Breast epithelium (tissue), 4 donors: ENCODE measurements at regions of chr2 and their contacts with region 1.

Region 1: GRCh38 chr2:19484736-19485135 is 126.3 kb upstream of the OSR1 start:
- DNase-seq: no peak
- H3K4me3 ChIP-seq: no peak overlapping the region
- H3K27ac ChIP-seq: no peak overlapping the region
- H3K4me1 ChIP-seq: no peaks in the 10 kb centered on the region
- H3K27me3 ChIP-seq: no peaks in the 10 kb centered on the region
- CTCF ChIP-seq: no peak
- POLR2A ChIP-seq: no peak

Region 2: DNA sequence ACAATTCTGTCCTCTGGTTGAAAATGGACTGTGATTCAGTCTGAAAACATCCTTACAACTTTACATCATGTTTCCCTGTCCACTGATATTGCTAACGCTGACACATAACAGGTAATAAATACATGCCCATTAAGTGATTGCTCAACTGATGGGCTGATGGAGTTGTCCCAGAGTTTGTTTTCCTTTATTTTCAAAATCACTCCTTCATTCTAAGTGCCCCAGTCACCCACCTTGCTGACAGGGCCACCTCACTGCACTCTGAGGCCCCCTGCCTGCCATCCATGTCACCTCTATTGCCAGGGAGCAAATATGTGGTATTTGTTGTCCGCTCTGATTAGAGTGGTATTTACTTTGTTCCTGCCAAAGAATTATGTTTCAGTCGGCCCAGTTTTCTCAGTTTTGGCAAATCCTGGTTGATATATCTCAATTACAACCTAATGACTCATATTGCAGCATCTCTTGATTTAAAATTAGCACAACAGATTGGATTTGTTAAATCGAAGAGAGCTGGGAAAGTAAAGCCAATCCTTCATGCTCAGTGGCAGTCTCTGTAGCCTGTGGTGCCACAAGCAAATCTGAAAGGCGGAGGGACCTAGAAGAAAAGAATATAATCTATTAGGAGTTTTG is 1029.4 kb before region 1 on chr2:
- intact Hi-C with region 1: no loop called
- DNase-seq: no peak
- H3K4me3 ChIP-seq: no peak overlapping the region
- H3K27ac ChIP-seq: peak overlapping the region in 1 of 2 donors; percentile 42
- H3K4me1 ChIP-seq: no peaks in the 10 kb centered on the region
- H3K27me3 ChIP-seq: no peaks in the 10 kb centered on the region
- CTCF ChIP-seq: no peak
- POLR2A ChIP-seq: no peak

Region 3: DNA sequence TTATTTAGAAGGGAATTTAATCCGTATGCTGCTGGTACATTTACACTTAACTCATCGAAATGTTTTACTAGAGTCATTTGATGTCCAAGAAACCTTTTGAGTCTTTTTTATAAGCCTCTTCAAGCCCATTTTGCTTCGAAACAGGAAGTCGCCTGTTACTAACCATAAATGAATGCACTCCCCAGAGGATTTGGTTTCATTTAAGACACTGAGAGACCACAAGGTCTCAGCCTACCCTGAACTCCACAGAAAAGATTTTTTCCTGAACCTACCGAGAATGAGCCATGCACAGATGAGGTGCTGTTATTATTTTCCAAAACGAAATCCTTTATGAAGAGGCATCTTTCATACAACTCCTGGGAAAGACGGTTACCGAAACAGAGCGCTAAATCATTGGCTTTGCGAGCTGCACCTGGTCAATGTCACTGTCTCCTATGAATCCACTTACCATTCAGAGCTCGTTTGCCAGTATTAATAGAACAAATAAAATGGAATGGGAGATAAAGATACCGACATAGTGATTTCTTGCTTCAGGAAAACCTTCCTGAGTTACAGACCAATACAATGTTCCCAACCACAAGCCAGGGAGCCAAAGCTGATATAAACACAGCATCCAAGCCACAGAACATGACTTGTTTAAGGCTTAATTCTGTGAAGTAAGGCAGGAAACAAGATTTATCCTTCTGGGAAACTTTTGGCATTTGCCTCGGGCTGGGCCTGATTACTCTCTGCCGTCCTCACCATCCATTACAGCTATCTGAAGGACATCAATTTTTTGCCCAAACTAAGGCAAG is 508.4 kb before region 1 on chr2:
- intact Hi-C with region 1: loop called (anchors 5 kb)
- DNase-seq: no peak
- H3K4me3 ChIP-seq: peak overlapping the region in 2 of 3 donors; percentile 1 to 21
- H3K27ac ChIP-seq: peak overlapping the region; percentile 34 to 74
- H3K4me1 ChIP-seq: no peaks in the 10 kb centered on the region
- H3K27me3 ChIP-seq: no peaks in the 10 kb centered on the region
- CTCF ChIP-seq: no peak
- POLR2A ChIP-seq: no peak

Region 4: GRCh38 chr2:19425419-19425818 is 59.3 kb before region 1 on chr2:
- intact Hi-C with region 1: no loop called
- DNase-seq: no peak
- H3K4me3 ChIP-seq: no peak overlapping the region
- H3K27ac ChIP-seq: no peak overlapping the region
- H3K4me1 ChIP-seq: no peaks in the 10 kb centered on the region
- H3K27me3 ChIP-seq: no peaks in the 10 kb centered on the region
- CTCF ChIP-seq: no peak
- POLR2A ChIP-seq: no peak